Body of pancreas (tissue), 4 donors: ENCODE measurements at regions of chr9 and their contacts with region 1.

Region 1: DNA sequence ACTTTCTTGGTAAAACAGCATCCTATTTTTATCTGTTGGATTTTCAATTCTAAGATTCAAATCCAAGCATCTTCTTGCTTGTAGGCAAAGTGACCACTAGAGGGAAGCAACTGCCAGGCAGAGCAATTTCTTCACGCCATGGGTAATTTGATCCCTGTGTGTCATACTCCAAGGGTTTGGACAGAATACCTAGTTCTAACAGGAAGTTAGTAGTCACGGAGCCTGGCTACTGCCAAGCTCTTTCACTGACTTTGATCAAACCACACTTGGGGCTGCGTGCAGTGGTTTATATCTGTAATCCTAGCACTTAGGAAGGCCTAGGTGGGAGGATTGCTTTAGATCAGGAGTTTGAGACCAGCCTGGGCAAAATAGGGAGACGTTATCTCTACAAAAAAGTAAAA is 473.6 kb upstream of the TNC start:
- DNase-seq: peak; percentile 52 to 90 (median 78)
- ATAC-seq: peak; percentile 93
- H3K4me3 ChIP-seq: no peak overlapping the region
- H3K27ac ChIP-seq: peak overlapping the region in 3 of 4 donors; percentile 29 to 77 (median 64)
- H3K4me1 ChIP-seq: no peaks in the 10 kb centered on the region
- H3K27me3 ChIP-seq: no peaks in the 10 kb centered on the region
- CTCF ChIP-seq: peak; percentile 60 to 94 (median 78)
- POLR2A ChIP-seq: no peak

Region 2: GRCh38 chr9:116572095-116572748 is 980.6 kb after region 1 on chr9:
- intact Hi-C with region 1: loop called (anchors 10 kb)
- DNase-seq: peak; percentile 93 to 96 (median 94)
- ATAC-seq: peak; percentile 91
- H3K4me3 ChIP-seq: no peak overlapping the region
- H3K27ac ChIP-seq: peak overlapping the region in 1 of 4 donors; percentile 15
- H3K4me1 ChIP-seq: peaks cover 57% of the 10 kb centered on the region
- H3K27me3 ChIP-seq: no peaks in the 10 kb centered on the region
- CTCF ChIP-seq: peak; percentile 81 to 97 (median 96)
- POLR2A ChIP-seq: no peak

Region 3: GRCh38 chr9:116656501-116656971 is 1065.0 kb after region 1 on chr9:
- intact Hi-C with region 1: loop called (anchors 10 kb)
- DNase-seq: no peak
- ATAC-seq: no peak
- H3K4me3 ChIP-seq: no peak overlapping the region
- H3K27ac ChIP-seq: no peak overlapping the region
- H3K4me1 ChIP-seq: no peaks in the 10 kb centered on the region
- H3K27me3 ChIP-seq: no peaks in the 10 kb centered on the region
- CTCF ChIP-seq: no peak
- POLR2A ChIP-seq: no peak